Common myeloid progenitor, CD34-positive (primary cell): ENCODE measurements at regions of chr22 and their contacts with region 1.

Region 1: GRCh38 chr22:41517172-41518047 is 26.9 kb downstream of the POLR3H start:
- DNase-seq: peak in 2 of 3 donors; percentile 16 to 29
- H3K4me3 ChIP-seq: no peak overlapping the region
- H3K27ac ChIP-seq: no peak overlapping the region
- H3K4me1 ChIP-seq: no peaks in the 10 kb centered on the region
- H3K27me3 ChIP-seq: no peaks in the 10 kb centered on the region

Region 2: DNA sequence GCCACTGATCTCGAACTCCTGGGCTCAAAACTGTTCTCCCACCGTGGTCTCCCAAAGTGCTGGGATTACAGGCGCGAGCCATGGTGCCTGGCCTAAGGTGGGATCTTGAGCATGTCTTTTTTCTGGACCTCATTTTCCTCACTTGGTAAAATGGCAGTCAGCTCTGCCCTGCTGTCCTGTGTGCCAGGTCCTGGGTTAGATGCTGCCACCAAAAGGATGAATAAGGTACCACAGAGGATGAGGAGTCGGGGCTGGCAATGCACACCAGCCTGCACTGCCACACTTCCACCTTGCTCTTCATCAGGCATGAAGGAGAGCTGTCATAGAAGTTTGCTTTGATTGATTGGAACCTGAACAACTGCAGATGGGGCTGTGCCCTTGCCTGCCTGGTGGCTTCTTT is 16.2 kb before region 1 on chr22:
- CTCF ChIA-PET with region 1: interaction called, 12 read pairs
- POLR2A ChIA-PET with region 1: no interaction called
- DNase-seq: peak; percentile 29 to 51 (median 40)
- H3K4me3 ChIP-seq: no peak overlapping the region
- H3K27ac ChIP-seq: no peak overlapping the region
- H3K4me1 ChIP-seq: no peaks in the 10 kb centered on the region
- H3K27me3 ChIP-seq: no peaks in the 10 kb centered on the region

Region 3: DNA sequence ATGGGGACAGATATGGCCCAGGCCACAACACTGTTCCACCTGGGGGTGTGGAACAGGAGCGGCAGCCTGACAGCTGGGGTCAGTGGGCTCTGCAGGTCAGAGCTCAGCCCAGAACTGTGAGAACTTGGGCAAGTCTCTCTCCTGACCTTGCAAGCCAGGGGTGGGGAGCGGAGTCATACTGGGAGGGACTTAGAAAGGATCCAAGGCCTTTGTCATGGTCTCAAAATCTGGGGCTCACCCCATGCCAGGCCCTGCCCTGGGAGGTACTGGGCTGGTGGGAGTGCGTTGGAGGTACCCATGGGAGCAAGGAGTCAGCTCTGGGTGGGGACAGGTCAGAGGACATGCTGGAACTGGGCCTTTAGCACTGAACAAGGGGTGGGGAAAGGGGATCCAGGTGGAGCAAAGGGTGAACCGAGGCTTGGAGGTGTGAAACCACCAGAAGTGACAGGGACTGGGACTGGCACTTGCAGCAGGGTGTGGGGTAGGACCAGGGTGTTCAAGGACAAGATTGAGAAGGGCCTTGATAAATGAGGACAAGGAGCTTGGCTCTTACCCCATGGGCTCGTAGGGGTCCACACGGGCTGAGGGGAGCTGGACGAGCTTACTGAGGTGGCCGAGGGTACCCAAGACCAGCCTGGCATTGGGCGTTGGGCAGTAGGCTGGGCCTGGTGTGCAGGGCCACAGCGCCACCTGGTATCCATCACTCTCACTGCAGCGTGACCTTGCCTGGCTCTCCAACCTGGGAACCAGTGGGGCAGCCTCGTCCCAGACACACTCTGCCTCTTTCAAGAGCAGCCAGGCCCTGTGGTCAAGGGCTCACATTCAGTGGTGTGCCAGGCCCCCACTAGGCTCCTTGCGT is 79.6 kb after region 1 on chr22:
- CTCF ChIA-PET with region 1: no interaction called
- POLR2A ChIA-PET with region 1: no interaction called
- DNase-seq: peak; percentile 44 to 51 (median 47)
- H3K4me3 ChIP-seq: no peak overlapping the region
- H3K27ac ChIP-seq: no peak overlapping the region
- H3K4me1 ChIP-seq: no peaks in the 10 kb centered on the region
- H3K27me3 ChIP-seq: peaks cover 0 to 81% (median 33%) of the 10 kb centered on the region in 5 experiments

Region 4: DNA sequence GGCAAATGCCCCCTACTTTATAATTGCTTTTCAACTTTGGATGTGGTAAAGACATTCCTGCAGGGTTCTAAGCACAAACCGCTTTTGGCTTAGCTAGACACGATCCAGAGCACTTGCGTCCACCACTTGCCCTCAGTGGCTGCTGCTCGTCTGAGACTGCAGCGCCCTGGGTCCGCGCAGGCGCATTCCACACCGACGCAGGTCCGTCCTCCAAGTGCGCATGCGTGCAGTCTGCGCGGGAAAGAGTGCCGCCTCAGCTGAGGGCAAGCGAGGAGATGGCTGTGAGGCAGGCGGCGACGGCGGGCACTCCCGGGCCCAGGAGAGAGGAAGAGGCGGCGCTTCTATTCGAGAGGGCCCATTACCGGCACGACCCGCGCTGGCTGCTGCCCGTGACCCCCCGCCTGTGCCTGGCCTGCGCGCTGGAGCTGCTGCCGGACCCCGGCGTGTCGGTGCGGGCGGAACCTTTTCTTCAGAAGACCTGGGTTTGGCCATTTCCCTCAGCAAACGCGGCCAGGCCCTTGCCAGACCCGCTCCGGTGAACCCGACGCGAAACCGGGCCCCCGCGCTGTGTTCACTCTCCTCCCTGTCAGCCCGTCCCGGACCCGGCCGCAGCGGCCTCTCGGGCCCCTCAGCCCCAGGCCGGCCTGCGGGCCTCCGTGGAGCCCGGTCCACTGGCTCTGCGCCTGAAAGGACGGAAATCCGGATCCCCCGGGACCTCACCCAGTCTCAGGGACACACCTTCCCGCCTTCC is 182.0 kb after region 1 on chr22 and contains the start of gene MEI1:
- CTCF ChIA-PET with region 1: no interaction called
- POLR2A ChIA-PET with region 1: no interaction called
- DNase-seq: peak; percentile 72 to 85 (median 75)
- H3K4me3 ChIP-seq: peak within 1 kb of the TSS in 5 of 7 experiments; percentile 21 to 69 (median 48)
- H3K27ac ChIP-seq: no peak within 1 kb of the TSS
- H3K4me1 ChIP-seq: peaks cover 0 to 20% (median 17%) of the 10 kb centered on the region in 4 experiments
- H3K27me3 ChIP-seq: no peaks in the 10 kb centered on the region

Region 5: GRCh38 chr22:41919357-41920224 is 402.2 kb after region 1 on chr22:
- CTCF ChIA-PET with region 1: no interaction called
- POLR2A ChIA-PET with region 1: no interaction called
- DNase-seq: peak; percentile 61 to 63 (median 62)
- H3K4me3 ChIP-seq: peak overlapping the region; percentile 2 to 76 (median 51)
- H3K27ac ChIP-seq: no peak overlapping the region
- H3K4me1 ChIP-seq: peaks cover 0 to 41% (median 34%) of the 10 kb centered on the region in 4 experiments
- H3K27me3 ChIP-seq: peaks cover 0 to 58% (median 19%) of the 10 kb centered on the region in 5 experiments